Activated naive CD4-positive, alpha-beta T cell treated with anti-CD3 and anti-CD28 coated beads for 36 hours (primary cell): ENCODE measurements at regions of chr9 and their contacts with region 1.

Region 1: DNA sequence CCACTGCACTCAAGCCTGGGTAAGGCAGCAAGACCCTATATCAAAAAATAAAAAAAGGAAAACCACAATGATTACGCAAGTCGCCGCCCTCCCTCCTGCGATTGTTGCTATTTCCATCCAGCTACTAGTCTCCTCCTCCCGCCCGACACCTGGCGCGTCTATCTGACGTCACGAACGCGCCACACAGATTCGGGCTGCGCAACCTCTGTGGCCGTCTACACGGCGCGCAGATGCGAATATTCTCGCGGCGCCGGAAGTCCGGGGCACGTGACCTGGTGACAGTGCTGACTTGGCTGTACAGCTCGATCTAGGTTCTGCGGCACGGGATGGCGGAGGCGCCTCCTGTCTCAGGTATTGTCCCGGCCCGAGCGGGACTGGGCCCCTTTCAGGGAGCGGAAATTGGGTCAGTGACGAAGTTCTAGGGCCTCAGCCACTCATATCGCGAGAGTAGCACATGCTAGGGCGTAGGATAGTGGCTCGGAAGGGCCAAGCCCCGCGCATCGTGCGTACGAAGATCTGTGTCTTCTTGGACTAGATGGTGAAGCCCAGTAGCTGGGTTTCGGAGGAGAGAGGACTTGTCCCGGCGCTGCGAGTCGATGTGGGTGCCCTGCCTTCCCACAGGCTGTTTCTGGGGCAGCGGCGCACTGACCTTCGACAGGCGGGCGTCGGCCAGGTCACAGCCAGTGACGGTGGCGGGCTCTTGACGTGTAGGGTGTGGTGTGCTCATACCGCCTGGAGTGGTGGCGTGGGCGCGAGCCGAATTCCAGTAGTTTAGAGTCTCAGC is at the start of gene NFX1:
- DNase-seq: peak; percentile 99
- H3K4me3 Mint-ChIP-seq: peak within 1 kb of the TSS; percentile 87
- H3K27ac Mint-ChIP-seq: peak within 1 kb of the TSS; percentile 99
- H3K4me1 Mint-ChIP-seq: peaks cover 55% of the 10 kb centered on the region
- H3K27me3 Mint-ChIP-seq: no peaks in the 10 kb centered on the region
- total RNA-seq, gene NFX1: 32.4 to 32.6 TPM

Region 2: GRCh38 chr9:33024966-33025571 is 265.4 kb before region 1 on chr9 and contains the start of gene DNAJA1:
- CTCF ChIA-PET with region 1: no interaction called
- intact Hi-C with region 1: loop called (anchors 1 kb)
- DNase-seq: peak; percentile 93
- H3K4me3 Mint-ChIP-seq: peak within 1 kb of the TSS; percentile 95
- H3K27ac Mint-ChIP-seq: peak within 1 kb of the TSS; percentile 94
- H3K4me1 Mint-ChIP-seq: peaks cover 75% of the 10 kb centered on the region
- H3K27me3 Mint-ChIP-seq: no peaks in the 10 kb centered on the region
- total RNA-seq, gene DNAJA1: 110 to 120 TPM

Region 3: GRCh38 chr9:33264473-33265177 is 25.8 kb before region 1 on chr9 and contains the starts of genes BAG1 and CHMP5:
- CTCF ChIA-PET with region 1: interaction called, 4 read pairs
- intact Hi-C with region 1: loop called (anchors 1 kb)
- DNase-seq: peak; percentile 100
- H3K4me3 Mint-ChIP-seq: peak within 1 kb of the TSS; percentile 94
- H3K27ac Mint-ChIP-seq: peak within 1 kb of the TSS; percentile 98
- H3K4me1 Mint-ChIP-seq: peaks cover 47% of the 10 kb centered on the region
- H3K27me3 Mint-ChIP-seq: no peaks in the 10 kb centered on the region
- total RNA-seq, gene BAG1: 38.1 to 40.5 TPM
- total RNA-seq, gene CHMP5: 151 to 162 TPM

Region 4: DNA sequence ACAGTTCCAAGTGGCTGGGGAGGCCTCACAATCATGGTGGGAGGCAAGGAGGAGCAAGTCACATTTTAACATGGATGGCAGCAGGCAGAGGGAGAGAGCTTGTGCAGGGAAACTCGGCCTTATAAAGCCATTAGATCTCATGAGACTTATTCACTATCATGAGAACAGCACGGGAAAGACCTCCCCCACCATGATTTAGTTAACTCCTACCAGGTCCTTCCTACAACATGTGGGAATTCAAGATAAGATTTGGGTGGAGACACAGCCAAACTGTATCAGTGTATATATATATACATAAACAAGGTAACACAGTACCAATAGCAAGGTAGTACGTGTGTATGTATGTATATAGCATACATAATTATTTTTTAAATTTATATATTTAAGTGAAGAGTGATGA is 50.7 kb after region 1 on chr9:
- CTCF ChIA-PET with region 1: no interaction called
- intact Hi-C with region 1: loop called (anchors 1 kb)
- DNase-seq: no peak
- H3K4me3 Mint-ChIP-seq: no peak overlapping the region
- H3K27ac Mint-ChIP-seq: no peak overlapping the region
- H3K4me1 Mint-ChIP-seq: peaks cover 3% of the 10 kb centered on the region
- H3K27me3 Mint-ChIP-seq: no peaks in the 10 kb centered on the region

Region 5: DNA sequence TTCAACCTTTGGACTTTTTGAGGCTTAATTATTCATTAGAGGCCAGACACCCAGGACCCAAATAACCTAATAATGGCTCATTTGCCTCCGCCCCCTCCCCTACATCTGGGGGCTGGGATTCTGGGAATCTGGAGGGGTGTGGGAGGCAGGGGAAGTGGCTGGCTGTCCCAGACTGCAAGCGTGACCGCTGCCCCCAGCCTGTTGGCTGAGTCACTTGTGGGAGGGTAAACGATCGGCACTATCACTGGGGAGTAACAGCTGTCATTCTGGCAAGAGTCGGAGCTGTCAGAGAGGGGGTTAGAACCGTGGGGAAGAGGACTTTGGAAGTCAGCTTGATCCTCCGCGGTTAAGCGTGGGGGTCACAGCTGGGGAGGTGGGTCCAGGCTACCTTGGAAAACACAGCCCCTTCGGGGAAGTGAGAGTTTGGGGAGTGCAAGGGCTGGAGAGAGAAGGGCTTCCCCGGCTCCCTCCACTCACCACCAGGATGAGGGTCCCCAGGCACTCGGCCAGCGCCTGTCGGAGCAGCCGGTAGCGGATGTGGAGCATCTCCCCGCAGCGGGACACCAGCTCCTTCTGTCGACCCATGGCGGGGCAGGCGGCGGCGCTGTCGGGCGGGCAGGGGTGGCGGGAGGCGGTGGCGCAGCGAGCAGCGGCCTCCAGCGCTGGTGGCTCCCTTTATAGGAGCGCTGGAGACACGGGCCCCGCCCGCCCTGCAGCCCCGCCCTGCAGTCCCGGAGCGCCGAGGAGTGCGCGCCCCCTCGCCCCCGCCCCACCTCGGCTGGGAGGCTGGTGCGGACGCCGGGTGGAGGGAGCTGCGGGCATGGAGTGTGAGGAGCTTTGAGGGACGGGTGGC is 156.7 kb after region 1 on chr9 and contains the start of gene AQP3:
- CTCF ChIA-PET with region 1: interaction called, 3 read pairs
- intact Hi-C with region 1: loop called (anchors 1 kb)
- DNase-seq: peak; percentile 85
- H3K4me3 Mint-ChIP-seq: peak within 1 kb of the TSS; percentile 86
- H3K27ac Mint-ChIP-seq: peak within 1 kb of the TSS; percentile 91
- H3K4me1 Mint-ChIP-seq: peaks cover 52% of the 10 kb centered on the region
- H3K27me3 Mint-ChIP-seq: no peaks in the 10 kb centered on the region
- total RNA-seq, gene AQP3: 7.2 to 8.1 TPM

Region 6: GRCh38 chr9:33473643-33474352 is 183.4 kb after region 1 on chr9 and contains the start of gene NOL6:
- CTCF ChIA-PET with region 1: no interaction called
- intact Hi-C with region 1: loop called (anchors 1 kb)
- DNase-seq: peak; percentile 99
- H3K4me3 Mint-ChIP-seq: peak within 1 kb of the TSS; percentile 95
- H3K27ac Mint-ChIP-seq: peak within 1 kb of the TSS; percentile 93
- H3K4me1 Mint-ChIP-seq: peaks cover 29% of the 10 kb centered on the region
- H3K27me3 Mint-ChIP-seq: no peaks in the 10 kb centered on the region
- total RNA-seq, gene NOL6: 38.2 to 38.6 TPM

Region 7: DNA sequence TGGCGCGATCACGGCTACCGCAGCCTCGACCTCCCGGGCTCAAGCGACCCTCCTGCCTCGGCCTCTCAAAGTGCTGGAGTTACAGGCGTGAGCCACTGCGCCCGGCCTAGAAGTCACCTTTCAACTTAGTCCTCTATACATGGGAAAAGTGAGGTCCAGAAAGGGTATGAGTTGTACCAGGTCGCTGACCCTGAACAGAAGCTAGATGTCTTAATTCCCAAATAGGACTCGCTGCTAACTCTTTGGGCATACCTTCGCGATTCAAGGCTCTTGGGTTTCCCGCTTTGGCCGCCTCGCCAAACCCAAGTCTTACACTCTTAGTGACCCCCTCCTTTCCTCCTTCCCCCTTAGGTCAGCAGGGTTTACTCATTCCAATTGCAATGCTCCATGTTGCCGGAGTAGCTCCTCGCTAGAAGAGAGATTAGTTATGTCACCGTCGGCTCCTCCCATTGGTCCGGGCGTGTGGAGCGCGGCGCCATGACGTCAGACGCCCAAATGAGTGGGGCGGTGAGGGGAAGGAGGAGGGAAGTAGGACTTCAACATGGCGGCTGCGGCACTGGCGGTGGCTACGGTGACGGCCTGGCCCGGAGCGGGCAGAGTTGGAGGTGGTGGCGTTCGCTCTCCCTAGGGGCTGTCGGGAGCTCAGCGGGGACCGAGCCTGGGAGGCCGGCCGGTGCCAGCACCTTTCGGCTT is 888.2 kb after region 1 on chr9 and contains the start of gene UBAP1:
- CTCF ChIA-PET with region 1: no interaction called
- intact Hi-C with region 1: loop called (anchors 2 kb)
- DNase-seq: peak; percentile 99
- H3K4me3 Mint-ChIP-seq: peak within 1 kb of the TSS; percentile 84
- H3K27ac Mint-ChIP-seq: peak within 1 kb of the TSS; percentile 94
- H3K4me1 Mint-ChIP-seq: peaks cover 16% of the 10 kb centered on the region
- H3K27me3 Mint-ChIP-seq: no peaks in the 10 kb centered on the region
- total RNA-seq, gene UBAP1: 29.9 to 31.7 TPM